ENCODE measurements at regions of chr2 and their contacts with region 1.

Region 1: DNA sequence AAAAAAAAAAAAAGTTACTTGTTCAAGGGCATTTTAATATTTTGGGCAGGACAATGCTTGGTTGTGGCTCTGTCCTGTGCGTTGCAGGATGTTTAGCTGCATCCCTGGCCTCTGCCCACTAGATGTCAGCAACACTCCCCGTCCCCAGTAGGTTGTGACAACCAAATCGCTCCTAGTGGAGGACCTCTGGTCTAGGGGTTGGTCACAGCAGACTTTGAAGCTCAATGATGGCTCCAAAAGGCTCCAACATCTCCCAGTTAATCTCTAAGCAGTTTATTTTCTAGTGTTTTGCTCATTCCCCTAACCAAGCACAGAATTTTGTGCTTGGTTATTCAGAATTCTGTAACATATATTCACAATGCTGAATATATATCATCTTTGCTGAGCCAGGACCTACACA is 67.0 kb downstream of the CHRNA1 start:
- DNase-seq: peak; percentile 27 to 70 (median 37)
- H3K4me3 ChIP-seq: no peak overlapping the region
- H3K4me3 Mint-ChIP-seq: no peak overlapping the region
- H3K27ac ChIP-seq: no peak overlapping the region
- H3K27ac Mint-ChIP-seq: no peak overlapping the region
- H3K4me1 ChIP-seq: no peaks in the 10 kb centered on the region
- H3K4me1 Mint-ChIP-seq: peaks cover 0 to 8% (median 5%) of the 10 kb centered on the region in 3 donors
- H3K27me3 ChIP-seq: no peaks in the 10 kb centered on the region
- H3K27me3 Mint-ChIP-seq: peaks cover 0 to 9% of the 10 kb centered on the region in 2 donors

Region 2: GRCh38 chr2:174682578-174683391 is 14.5 kb before region 1 on chr2:
- CTCF ChIA-PET with region 1: interaction called, 100 read pairs
- POLR2A ChIA-PET with region 1: no interaction called
- DNase-seq: peak; percentile 54 to 80 (median 74)
- H3K4me3 ChIP-seq: peak overlapping the region; percentile 67
- H3K4me3 Mint-ChIP-seq: peak overlapping the region; percentile 89 to 99 (median 91)
- H3K27ac ChIP-seq: peak overlapping the region; percentile 71
- H3K27ac Mint-ChIP-seq: peak overlapping the region; percentile 82 to 98 (median 94)
- H3K4me1 ChIP-seq: peaks cover 31% of the 10 kb centered on the region
- H3K4me1 Mint-ChIP-seq: peaks cover 51 to 74% (median 54%) of the 10 kb centered on the region in 3 donors
- H3K27me3 ChIP-seq: no peaks in the 10 kb centered on the region
- H3K27me3 Mint-ChIP-seq: no peaks in the 10 kb centered on the region

Region 3: GRCh38 chr2:174729797-174730697 is 32.8 kb after region 1 on chr2:
- CTCF ChIA-PET with region 1: interaction called, 18 read pairs
- POLR2A ChIA-PET with region 1: no interaction called
- DNase-seq: peak; percentile 13 to 60 (median 30)
- H3K4me3 ChIP-seq: peak overlapping the region; percentile 68
- H3K4me3 Mint-ChIP-seq: peak overlapping the region; percentile 81 to 94 (median 85)
- H3K27ac ChIP-seq: no peak overlapping the region
- H3K27ac Mint-ChIP-seq: peak overlapping the region in 4 of 8 donors; percentile 14 to 80 (median 24)
- H3K4me1 ChIP-seq: peaks cover 7% of the 10 kb centered on the region
- H3K4me1 Mint-ChIP-seq: peaks cover 8 to 24% (median 22%) of the 10 kb centered on the region in 3 donors
- H3K27me3 ChIP-seq: peaks cover 5% of the 10 kb centered on the region
- H3K27me3 Mint-ChIP-seq: peaks cover 6 to 19% of the 10 kb centered on the region in 2 donors

Region 4: GRCh38 chr2:174771631-174772471 is 74.6 kb after region 1 on chr2:
- CTCF ChIA-PET with region 1: interaction called, 34 read pairs
- POLR2A ChIA-PET with region 1: no interaction called
- DNase-seq: peak in 1 of 5 donors; percentile 66
- H3K4me3 ChIP-seq: no peak overlapping the region
- H3K4me3 Mint-ChIP-seq: no peak overlapping the region
- H3K27ac ChIP-seq: no peak overlapping the region
- H3K27ac Mint-ChIP-seq: peak overlapping the region in 6 of 8 donors; percentile 20 to 85 (median 60)
- H3K4me1 ChIP-seq: peaks cover 11% of the 10 kb centered on the region
- H3K4me1 Mint-ChIP-seq: peaks cover 5 to 19% (median 16%) of the 10 kb centered on the region in 3 donors
- H3K27me3 ChIP-seq: no peaks in the 10 kb centered on the region
- H3K27me3 Mint-ChIP-seq: peaks cover 0 to 12% of the 10 kb centered on the region in 2 donors

Measured in CD8-positive, alpha-beta memory T cell (primary cell).